HEK293T (cell line): ENCODE measurements at regions of chr1 and their contacts with region 1.

Region 1: GRCh38 chr1:36134505-36135329 is 9.7 kb upstream of the COL8A2 start:
- DNase-seq: peak; percentile 80

Region 2: GRCh38 chr1:35915693-35916092 is 219.0 kb before region 1 on chr1:
- CTCF ChIA-PET with region 1: no interaction called
- POLR2A ChIA-PET with region 1: no interaction called
- DNase-seq: no peak

Region 3: GRCh38 chr1:36099681-36100341 is 34.9 kb before region 1 on chr1:
- CTCF ChIA-PET with region 1: interaction called, 26 read pairs
- POLR2A ChIA-PET with region 1: interaction called, 4 read pairs
- DNase-seq: peak; percentile 85

Region 4: GRCh38 chr1:36115200-36115669 is 19.5 kb before region 1 on chr1:
- CTCF ChIA-PET with region 1: interaction called, 20 read pairs
- POLR2A ChIA-PET with region 1: interaction called, 3 read pairs
- DNase-seq: no peak

Region 5: DNA sequence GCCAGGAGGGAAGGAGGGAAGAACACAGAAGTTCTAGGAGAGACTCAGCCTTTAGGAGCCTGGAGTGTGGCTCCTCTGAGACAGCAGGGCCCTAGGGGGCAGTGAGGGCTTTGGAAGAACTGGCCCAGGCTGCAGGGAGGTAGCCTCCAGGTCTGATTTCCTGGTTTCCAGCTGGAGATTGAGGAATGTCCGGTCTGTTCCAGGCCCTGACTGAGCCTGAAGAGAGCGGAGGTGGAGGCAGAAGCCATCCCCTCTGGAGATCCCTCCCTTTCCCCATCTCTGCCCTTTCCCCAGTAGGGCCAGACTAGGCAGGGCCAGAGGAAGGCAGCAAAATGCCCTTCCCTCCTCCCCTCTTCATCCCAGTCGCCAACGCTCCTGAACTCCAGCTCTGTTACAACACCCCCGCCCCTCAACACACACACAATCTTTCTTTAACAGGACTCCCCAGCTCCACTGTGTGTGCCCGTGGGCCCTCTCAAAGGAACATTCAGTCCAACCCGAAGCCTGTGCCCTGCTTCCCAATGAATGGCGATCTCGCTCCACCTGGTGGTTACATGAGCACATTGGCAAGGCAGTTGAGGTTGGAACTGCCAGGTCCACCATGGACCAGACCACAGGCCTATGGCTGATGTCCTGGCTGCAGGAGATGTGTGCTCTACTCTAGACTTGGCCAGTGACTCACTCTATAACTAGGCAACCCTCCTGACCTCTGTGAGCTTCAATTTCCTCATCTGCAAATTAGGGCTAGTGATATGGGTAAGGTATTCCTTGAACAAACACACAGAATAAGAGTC is 53.3 kb after region 1 on chr1:
- CTCF ChIA-PET with region 1: interaction called, 14 read pairs
- POLR2A ChIA-PET with region 1: no interaction called
- DNase-seq: peak; percentile 85